Naive thymus-derived CD4-positive, alpha-beta T cell (primary cell): ENCODE measurements at regions of chr1 and their contacts with region 1.

Region 1: DNA sequence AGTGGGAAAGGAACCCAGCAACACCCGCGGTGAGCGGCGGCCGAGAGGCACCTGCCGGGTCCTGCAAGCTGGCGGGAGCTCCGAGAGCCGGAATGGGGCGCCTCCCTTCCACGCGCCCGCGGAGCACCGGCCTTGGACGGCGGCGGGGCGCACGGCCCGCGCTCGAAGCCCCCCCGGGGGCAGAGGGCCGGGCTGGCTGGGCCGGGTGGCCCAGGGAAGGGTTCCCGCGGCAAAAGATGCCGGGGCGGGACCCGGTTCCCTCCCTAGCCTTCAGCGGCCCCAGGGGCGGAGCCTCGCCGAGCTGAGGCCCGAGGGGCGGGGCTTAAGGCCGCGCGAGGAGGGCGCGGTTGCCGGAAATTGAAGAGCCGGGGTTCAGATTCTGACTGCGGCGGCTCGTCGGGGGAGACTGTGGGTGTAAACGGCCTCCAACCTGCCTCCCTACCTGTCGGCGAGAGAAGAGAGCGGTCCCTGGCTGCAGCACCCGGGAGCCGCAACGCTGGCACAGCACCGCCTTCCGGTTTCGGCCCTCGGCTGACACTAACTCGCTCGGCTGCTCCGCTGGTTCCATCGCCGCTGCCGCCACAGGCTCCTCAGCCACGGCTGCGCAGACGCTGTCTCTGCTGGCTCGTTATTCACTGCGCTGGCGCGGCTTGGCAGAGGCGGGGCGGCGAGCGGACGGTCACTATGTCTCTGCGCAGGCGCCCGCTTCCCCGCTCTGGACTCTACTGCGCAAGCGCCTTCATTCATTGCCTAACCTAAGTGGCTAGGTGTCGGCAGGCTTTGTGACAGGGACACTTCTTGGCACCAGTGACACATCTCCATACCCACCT is at the start of gene RABIF:
- DNase-seq: peak; percentile 93 to 97 (median 95)
- ATAC-seq: peak; percentile 94
- H3K4me3 ChIP-seq: peak within 1 kb of the TSS; percentile 90
- H3K4me3 Mint-ChIP-seq: peak within 1 kb of the TSS; percentile 85 to 100 (median 97)
- H3K27ac ChIP-seq: peak within 1 kb of the TSS; percentile 86
- H3K27ac Mint-ChIP-seq: peak within 1 kb of the TSS; percentile 88 to 99 (median 98)
- H3K4me1 ChIP-seq: peaks cover 6 to 12% of the 10 kb centered on the region in 2 donors
- H3K4me1 Mint-ChIP-seq: peaks cover 13 to 37% (median 29%) of the 10 kb centered on the region in 7 donors
- H3K27me3 ChIP-seq: no peaks in the 10 kb centered on the region
- H3K27me3 Mint-ChIP-seq: no peaks in the 10 kb centered on the region
- total RNA-seq, gene RABIF: 11.6 to 17.1 (median 14.5) TPM

Region 2: DNA sequence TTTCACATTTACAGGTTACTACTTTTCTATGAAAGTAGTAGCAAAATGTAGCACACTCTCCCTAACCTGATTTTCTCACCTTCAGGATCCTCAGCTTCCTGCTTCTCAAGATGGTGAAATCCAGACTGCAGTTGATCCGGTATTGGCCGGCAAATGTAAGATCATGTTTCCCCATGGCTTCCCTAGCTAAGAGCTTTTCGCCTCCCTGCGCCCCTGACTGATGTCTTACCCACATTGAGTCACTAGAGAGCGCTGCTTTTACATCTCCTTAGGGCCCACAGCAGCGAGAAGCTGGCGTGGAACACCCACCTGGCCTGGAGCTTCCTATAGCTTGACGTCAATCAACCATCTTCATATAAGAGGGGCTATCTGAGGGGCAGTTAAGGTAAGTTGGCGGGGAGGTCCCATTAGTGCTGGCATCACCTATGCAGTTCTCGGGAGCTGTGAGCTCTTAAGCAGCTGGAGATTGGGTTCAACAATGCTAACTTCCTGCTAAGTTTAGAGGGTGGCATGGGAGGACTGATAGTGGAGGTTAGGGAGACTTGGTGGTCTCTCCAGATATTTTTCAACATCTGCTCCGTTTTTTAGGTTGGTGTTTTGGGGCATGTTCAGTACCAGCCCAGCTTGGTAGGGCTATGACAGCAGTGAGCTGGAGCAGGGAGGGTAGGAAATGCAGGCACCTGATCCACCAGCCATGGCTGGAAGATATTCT is 733.8 kb before region 1 on chr1:
- CTCF ChIA-PET with region 1: no interaction called
- POLR2A ChIA-PET with region 1: no interaction called
- intact Hi-C with region 1: loop called (anchors 2 to 5 kb)
- DNase-seq: peak in 5 of 9 donors; percentile 45 to 52 (median 48)
- ATAC-seq: peak; percentile 85
- H3K4me3 ChIP-seq: no peak overlapping the region
- H3K4me3 Mint-ChIP-seq: peak overlapping the region in 2 of 10 donors; percentile 1 to 46
- H3K27ac ChIP-seq: peak overlapping the region; percentile 47
- H3K27ac Mint-ChIP-seq: peak overlapping the region; percentile 17 to 87 (median 67)
- H3K4me1 ChIP-seq: peaks cover 29 to 35% of the 10 kb centered on the region in 2 donors
- H3K4me1 Mint-ChIP-seq: peaks cover 28 to 58% (median 51%) of the 10 kb centered on the region in 7 donors
- H3K27me3 ChIP-seq: no peaks in the 10 kb centered on the region
- H3K27me3 Mint-ChIP-seq: no peaks in the 10 kb centered on the region

Region 3: GRCh38 chr1:202348509-202349205 is 540.1 kb before region 1 on chr1 and contains the start of gene PPP1R12B:
- CTCF ChIA-PET with region 1: no interaction called
- POLR2A ChIA-PET with region 1: no interaction called
- intact Hi-C with region 1: loop called (anchors 1 kb)
- DNase-seq: peak; percentile 83 to 95 (median 92)
- ATAC-seq: peak; percentile 98
- H3K4me3 ChIP-seq: peak within 1 kb of the TSS; percentile 82
- H3K4me3 Mint-ChIP-seq: peak within 1 kb of the TSS; percentile 87 to 97 (median 93)
- H3K27ac ChIP-seq: peak within 1 kb of the TSS; percentile 73
- H3K27ac Mint-ChIP-seq: peak within 1 kb of the TSS; percentile 64 to 97 (median 86)
- H3K4me1 ChIP-seq: peaks cover 3 to 16% of the 10 kb centered on the region in 2 donors
- H3K4me1 Mint-ChIP-seq: peaks cover 22 to 40% (median 34%) of the 10 kb centered on the region in 7 donors
- H3K27me3 ChIP-seq: no peaks in the 10 kb centered on the region
- H3K27me3 Mint-ChIP-seq: no peaks in the 10 kb centered on the region
- total RNA-seq, gene PPP1R12B: 23.6 to 38.1 (median 31.0) TPM

Region 4: GRCh38 chr1:202861420-202862200 is 27.1 kb before region 1 on chr1:
- CTCF ChIA-PET with region 1: no interaction called
- POLR2A ChIA-PET with region 1: no interaction called
- intact Hi-C with region 1: loop called in 1 of 2 experiments (anchors 2 kb)
- DNase-seq: peak in 3 of 9 donors; percentile 10 to 62 (median 39)
- ATAC-seq: peak; percentile 93
- H3K4me3 ChIP-seq: peak overlapping the region; percentile 53
- H3K4me3 Mint-ChIP-seq: peak overlapping the region; percentile 73 to 90 (median 84)
- H3K27ac ChIP-seq: no peak overlapping the region
- H3K27ac Mint-ChIP-seq: peak overlapping the region in 2 of 9 donors; percentile 15 to 59
- H3K4me1 ChIP-seq: peaks cover 0 to 8% of the 10 kb centered on the region in 2 donors
- H3K4me1 Mint-ChIP-seq: peaks cover 8 to 17% (median 12%) of the 10 kb centered on the region in 7 donors
- H3K27me3 ChIP-seq: peaks cover 0 to 16% of the 10 kb centered on the region in 2 donors
- H3K27me3 Mint-ChIP-seq: peaks cover 32 to 76% (median 61%) of the 10 kb centered on the region in 5 donors

Region 5: DNA sequence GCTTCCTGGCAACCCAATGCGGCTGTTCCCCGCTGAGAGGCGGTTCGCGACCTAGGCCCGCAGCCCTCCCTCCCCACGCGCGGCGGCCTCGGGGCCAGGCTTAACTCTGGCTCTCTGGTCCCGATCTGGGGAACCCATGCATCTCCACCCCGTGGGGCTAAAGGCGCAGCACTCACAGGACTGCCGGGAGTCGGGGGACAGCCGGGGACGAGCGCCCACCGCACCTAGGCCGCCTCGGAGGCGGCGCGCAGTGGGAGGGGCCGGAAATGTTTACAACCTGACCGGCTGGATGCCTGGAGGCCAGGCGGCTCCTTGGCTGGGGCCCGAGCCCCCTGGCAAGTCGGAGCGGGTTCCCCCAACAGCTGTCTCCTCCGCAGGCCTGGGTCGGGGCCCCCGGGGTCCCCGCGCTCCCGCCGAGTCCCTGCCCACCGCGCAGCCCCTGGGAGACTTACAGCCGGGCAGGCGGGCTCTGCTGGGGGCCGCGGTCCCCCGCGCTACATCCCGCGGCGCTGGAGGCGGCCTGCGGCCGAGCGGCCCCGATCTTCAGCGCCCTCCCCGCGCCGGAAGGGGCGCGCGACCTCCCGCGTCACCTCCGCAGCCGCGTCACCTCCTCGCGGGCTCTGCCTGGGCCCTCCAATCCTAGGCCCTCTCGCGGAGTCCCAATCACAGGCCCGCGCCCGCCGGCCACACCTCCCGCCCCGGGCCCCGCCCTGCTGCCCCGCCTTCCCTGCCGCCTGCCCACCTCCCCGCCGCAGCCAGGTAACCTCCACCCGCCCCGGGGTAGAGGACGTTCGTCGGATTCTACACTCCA is 69.2 kb after region 1 on chr1 and contains the start of gene ADIPOR1:
- CTCF ChIA-PET with region 1: no interaction called
- POLR2A ChIA-PET with region 1: no interaction called
- intact Hi-C with region 1: loop called (anchors 1 kb)
- DNase-seq: peak; percentile 88 to 96 (median 94)
- ATAC-seq: peak; percentile 99
- H3K4me3 ChIP-seq: peak within 1 kb of the TSS; percentile 84
- H3K4me3 Mint-ChIP-seq: peak within 1 kb of the TSS; percentile 76 to 97 (median 92)
- H3K27ac ChIP-seq: peak within 1 kb of the TSS; percentile 95
- H3K27ac Mint-ChIP-seq: peak within 1 kb of the TSS; percentile 86 to 98 (median 95)
- H3K4me1 ChIP-seq: peaks cover 19 to 39% of the 10 kb centered on the region in 2 donors
- H3K4me1 Mint-ChIP-seq: peaks cover 20 to 55% (median 52%) of the 10 kb centered on the region in 7 donors
- H3K27me3 ChIP-seq: no peaks in the 10 kb centered on the region
- H3K27me3 Mint-ChIP-seq: no peaks in the 10 kb centered on the region
- total RNA-seq, gene ADIPOR1: 51.9 to 84.5 (median 69.6) TPM

Region 6: GRCh38 chr1:202998836-202999750 is 110.3 kb after region 1 on chr1:
- CTCF ChIA-PET with region 1: interaction called, 10 read pairs
- POLR2A ChIA-PET with region 1: no interaction called
- intact Hi-C with region 1: loop called in 1 of 2 experiments (anchors 2 kb)
- DNase-seq: peak; percentile 18 to 74 (median 63)
- ATAC-seq: peak; percentile 89
- H3K4me3 ChIP-seq: no peak overlapping the region
- H3K4me3 Mint-ChIP-seq: peak overlapping the region in 7 of 10 donors; percentile 44 to 75 (median 56)
- H3K27ac ChIP-seq: no peak overlapping the region
- H3K27ac Mint-ChIP-seq: peak overlapping the region in 4 of 9 donors; percentile 23 to 70 (median 52)
- H3K4me1 ChIP-seq: no peaks in the 10 kb centered on the region
- H3K4me1 Mint-ChIP-seq: peaks cover 3 to 10% (median 6%) of the 10 kb centered on the region in 7 donors
- H3K27me3 ChIP-seq: no peaks in the 10 kb centered on the region
- H3K27me3 Mint-ChIP-seq: peaks cover 24 to 40% (median 28%) of the 10 kb centered on the region in 5 donors

Region 7: DNA sequence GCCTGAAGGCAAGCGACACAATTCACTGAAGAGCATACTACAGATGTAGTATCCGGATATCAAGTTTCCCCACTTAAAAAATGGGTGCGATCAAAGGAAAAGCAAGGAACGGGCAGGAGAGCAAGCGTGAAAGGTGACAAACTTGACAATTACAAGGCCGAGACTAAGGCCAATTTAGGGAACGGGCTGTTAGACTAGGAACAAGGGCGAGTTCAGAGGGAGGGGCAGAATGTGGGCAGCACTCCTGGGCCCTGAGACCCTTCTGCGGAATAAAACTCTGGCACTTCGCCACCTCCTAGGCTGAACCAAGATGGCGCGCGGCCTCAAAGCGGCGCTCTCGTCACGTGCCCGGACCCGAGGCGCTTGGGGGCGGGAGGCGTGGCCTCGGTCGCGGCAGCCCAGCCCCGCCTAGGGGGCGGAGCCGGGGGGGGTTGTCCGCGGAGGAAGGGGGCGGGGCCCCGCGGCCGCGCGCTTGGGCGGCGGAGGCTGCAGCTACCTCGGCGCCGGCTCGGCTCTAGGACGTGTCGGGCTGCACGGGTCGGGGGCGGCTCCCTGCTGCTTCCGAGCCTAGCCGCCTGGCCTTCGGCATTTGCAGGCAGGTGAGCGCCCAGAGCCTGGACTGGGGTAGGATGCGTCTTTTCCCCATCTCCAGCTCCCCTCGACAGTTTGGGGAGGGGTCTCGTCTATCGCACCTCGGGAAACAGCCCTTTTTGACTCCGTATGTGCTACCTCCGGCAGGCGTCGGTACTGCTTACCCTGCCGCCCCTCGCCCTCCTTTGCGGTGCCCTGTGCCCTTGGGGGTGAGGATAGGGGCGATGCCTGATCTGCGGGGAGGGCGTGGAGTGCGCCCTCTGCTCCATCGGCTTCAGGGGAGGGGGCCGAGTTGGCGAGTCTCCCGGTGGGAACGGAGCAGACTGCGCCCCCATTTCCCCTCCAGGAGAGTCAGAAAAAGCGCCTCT is 137.6 kb after region 1 on chr1 and contains the start of gene PPFIA4:
- CTCF ChIA-PET with region 1: no interaction called
- POLR2A ChIA-PET with region 1: no interaction called
- intact Hi-C with region 1: loop called in 1 of 2 experiments (anchors 1 kb)
- DNase-seq: peak; percentile 72 to 94 (median 89)
- ATAC-seq: peak; percentile 98
- H3K4me3 ChIP-seq: peak within 1 kb of the TSS; percentile 84
- H3K4me3 Mint-ChIP-seq: peak within 1 kb of the TSS; percentile 74 to 95 (median 84)
- H3K27ac ChIP-seq: peak within 1 kb of the TSS; percentile 53
- H3K27ac Mint-ChIP-seq: peak within 1 kb of the TSS; percentile 73 to 96 (median 85)
- H3K4me1 ChIP-seq: peaks cover 0 to 11% of the 10 kb centered on the region in 2 donors
- H3K4me1 Mint-ChIP-seq: peaks cover 0 to 24% (median 14%) of the 10 kb centered on the region in 7 donors
- H3K27me3 ChIP-seq: no peaks in the 10 kb centered on the region
- H3K27me3 Mint-ChIP-seq: peaks cover 0 to 9% (median 0%) of the 10 kb centered on the region in 5 donors
- total RNA-seq, gene PPFIA4: 0.40 to 45.5 (median 2.4) TPM